ENCODE measurements at regions of chr1 and their contacts with region 1.

Region 1: DNA sequence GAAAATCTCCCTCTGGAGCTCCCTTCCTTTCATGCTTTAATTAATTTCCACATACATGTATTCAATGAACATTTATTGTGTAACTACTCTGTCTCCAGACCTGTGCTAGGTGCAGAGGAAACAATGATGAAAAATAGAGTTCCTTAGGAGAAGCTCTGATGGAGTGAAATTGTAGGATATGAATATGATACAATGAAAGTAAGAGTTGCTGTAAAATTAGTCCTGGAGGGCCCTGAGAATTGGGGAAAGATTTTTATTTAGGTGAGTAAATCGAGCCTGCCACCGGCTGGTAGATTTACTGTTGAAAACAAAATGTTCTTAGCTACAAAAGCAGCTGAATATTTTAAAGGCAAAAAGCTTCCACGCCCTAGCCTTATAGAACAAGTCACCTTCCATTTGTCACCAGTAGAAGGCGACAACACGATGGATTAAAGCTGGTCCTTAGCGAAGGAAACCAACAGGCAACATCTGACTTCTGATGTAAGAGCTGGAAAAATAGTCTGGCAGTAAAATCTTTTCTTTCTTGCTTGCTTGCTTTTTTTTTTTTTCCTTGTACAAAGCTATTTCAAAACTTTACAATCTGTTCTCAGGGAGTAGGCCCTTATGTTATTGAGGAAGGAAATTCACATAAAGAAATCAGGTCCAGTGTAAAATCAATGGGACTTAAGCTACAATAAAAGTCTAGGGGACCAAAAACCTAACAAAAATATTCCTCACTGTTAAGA is 82.0 kb upstream of the ROR1 start:
- DNase-seq: peak in 1 of 3 donors; percentile 87
- ATAC-seq: peak; percentile 92
- H3K4me3 ChIP-seq: peak overlapping the region; percentile 3
- H3K4me1 ChIP-seq: peaks cover 7% of the 10 kb centered on the region
- CTCF ChIP-seq: peak; percentile 36

Region 2: DNA sequence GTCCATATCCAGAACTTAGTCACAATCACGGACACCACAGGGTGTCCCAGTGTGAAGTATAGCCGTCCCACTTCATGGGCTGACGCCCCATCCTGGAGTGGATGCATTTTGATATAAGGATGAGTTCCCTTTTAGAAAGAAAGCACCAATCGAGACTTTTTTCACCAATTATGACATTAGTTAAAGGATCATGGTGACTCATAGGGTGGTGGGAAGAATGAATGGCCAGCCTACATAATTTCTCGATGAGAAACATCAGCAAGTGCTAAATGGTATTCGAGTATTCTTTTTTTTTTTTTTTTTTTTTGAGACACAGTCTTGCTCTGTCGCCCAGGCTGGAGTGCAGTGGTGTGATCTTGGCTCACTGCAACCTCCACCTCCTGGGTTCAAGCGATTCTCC is 1293.5 kb before region 1 on chr1:
- intact Hi-C with region 1: no loop called
- DNase-seq: no peak
- ATAC-seq: no peak
- H3K4me3 ChIP-seq: no peak overlapping the region
- H3K4me1 ChIP-seq: no peaks in the 10 kb centered on the region
- CTCF ChIP-seq: no peak

Region 3: DNA sequence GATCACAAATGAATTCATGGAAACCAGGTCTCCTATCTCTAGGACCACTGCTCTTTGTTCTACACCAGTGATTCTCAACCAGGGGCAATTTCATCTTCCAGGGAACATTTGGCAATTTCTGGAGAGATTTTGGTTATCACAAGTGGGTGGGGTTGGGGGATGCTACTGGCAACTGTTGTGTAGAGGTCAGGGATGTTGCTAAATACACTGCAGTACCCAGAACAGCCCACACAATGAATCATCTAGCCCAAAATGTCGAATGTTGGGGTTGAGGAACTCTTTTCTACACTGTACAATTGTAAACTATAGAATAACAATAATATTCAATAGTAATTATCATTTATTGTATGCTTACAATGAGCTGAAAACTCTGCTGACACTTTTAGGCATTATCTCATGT is 455.9 kb after region 1 on chr1:
- intact Hi-C with region 1: loop called in 1 of 2 experiments (anchors 10 kb)
- DNase-seq: no peak
- ATAC-seq: no peak
- H3K4me3 ChIP-seq: no peak overlapping the region
- H3K4me1 ChIP-seq: no peaks in the 10 kb centered on the region
- CTCF ChIP-seq: no peak

Measured in mucosa of descending colon (tissue), 3 donors.